Mammary epithelial cell (primary cell): ENCODE measurements at regions of chr5 and their contacts with region 1.

Region 1: DNA sequence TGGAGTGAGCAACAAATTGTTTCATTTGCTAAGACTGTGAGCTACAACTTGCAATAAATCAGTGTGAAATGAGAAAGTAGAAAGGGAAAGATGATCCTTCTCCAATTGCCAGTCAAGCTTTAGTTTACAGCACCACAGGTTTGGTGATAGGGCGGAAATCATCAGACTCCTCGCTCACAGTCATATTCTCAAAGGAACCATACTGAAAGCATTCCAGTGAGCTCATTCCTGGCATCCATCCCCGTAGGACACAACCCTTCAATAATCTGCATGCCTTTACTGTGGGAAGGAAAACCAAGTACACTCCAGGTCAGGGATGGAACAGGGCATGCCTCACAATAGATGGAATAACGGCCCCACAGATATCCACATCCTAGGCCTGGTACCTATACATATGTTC is 80.7 kb downstream of the FSTL4 start:
- DNase-seq: no peak
- H3K4me3 ChIP-seq: no peak overlapping the region
- H3K27ac ChIP-seq: no peak overlapping the region
- H3K4me1 ChIP-seq: no peaks in the 10 kb centered on the region
- H3K27me3 ChIP-seq: no peaks in the 10 kb centered on the region
- CTCF ChIP-seq: no peak

Region 2: DNA sequence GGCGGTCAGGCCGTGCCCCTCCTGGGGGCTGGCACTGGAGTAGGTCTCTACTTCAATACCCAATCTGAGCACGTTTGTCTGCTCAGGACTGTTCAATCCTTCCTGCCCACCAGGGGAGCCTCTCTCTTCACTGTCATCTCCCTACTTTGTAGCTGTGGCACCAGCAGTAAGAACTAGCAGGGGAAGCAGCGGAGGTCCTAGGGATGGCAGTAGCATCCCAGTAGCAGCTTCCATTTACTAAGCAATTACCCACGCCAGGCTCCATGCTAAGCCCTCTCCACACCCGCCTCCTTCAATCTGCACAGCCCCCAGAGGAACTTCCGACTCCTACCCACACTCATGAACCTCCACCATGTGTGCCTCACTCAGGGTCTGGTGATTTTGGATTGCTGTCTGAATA is 49.0 kb after region 1 on chr5:
- CTCF ChIA-PET with region 1: no interaction called
- dilution Hi-C with region 1: no loop called
- in situ Hi-C with region 1: no loop called
- intact Hi-C with region 1: loop called (anchors 1 kb)
- DNase-seq: no peak
- H3K4me3 ChIP-seq: no peak overlapping the region
- H3K27ac ChIP-seq: no peak overlapping the region
- H3K4me1 ChIP-seq: no peaks in the 10 kb centered on the region
- H3K27me3 ChIP-seq: peaks cover 6% of the 10 kb centered on the region
- CTCF ChIP-seq: no peak

Region 3: DNA sequence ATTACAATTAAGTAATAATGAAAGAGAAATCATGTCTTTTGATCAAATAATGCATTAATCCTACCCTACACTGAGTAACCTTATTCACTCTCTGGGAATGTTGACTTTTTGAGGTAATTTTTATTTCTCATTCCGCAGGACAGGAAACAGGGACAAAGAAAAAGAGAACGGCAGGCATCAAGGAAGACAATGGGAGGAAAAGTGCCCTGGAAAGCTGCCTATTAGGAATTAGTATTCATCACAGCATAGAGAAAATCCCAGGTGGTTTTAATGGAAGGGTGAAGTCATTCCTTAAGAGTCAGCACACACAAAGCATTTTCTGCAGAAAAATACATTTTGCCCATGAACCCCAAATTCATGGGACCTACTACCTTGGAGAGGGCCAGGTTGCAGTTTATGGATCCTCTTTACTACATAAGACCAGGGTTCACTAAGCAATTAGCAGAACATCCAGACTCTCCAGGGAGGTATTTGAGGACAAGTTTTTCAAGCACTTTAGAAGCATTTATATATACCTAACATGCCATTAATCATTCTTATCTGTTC is 71.3 kb after region 1 on chr5:
- CTCF ChIA-PET with region 1: no interaction called
- dilution Hi-C with region 1: no loop called
- in situ Hi-C with region 1: no loop called
- intact Hi-C with region 1: no loop called
- DNase-seq: no peak
- H3K4me3 ChIP-seq: no peak overlapping the region
- H3K27ac ChIP-seq: no peak overlapping the region
- H3K4me1 ChIP-seq: no peaks in the 10 kb centered on the region
- H3K27me3 ChIP-seq: peaks cover 3% of the 10 kb centered on the region
- CTCF ChIP-seq: no peak

Region 4: DNA sequence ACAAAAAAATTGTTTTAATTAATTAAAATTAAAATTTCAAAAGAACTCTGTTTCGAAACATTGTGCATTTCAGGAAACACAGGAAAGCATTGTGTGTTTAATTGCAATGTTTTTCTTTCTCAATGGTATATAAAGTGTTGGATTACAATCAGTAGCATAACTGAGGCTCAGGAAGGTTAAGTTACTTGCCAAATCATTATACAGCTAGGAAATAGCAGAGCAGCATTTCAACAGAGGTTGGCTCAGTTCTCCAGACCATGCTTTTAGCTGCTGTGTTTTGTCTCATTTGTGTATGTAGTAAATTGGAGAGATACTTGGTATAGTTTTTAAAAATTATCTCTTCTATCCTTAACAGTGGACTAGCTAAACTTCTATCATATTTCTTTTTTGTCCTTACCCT is 1176.7 kb after region 1 on chr5:
- CTCF ChIA-PET with region 1: no interaction called
- dilution Hi-C with region 1: no loop called
- in situ Hi-C with region 1: no loop called
- intact Hi-C with region 1: no loop called
- DNase-seq: no peak
- H3K4me3 ChIP-seq: no peak overlapping the region
- H3K27ac ChIP-seq: no peak overlapping the region
- H3K4me1 ChIP-seq: no peaks in the 10 kb centered on the region
- H3K27me3 ChIP-seq: no peaks in the 10 kb centered on the region
- CTCF ChIP-seq: no peak